ENCODE measurements at regions of chr6 and their contacts with region 1.

Region 1: GRCh38 chr6:50815436-50816114 is 3.1 kb upstream of the TFAP2B start:
- DNase-seq: no peak
- ATAC-seq: no peak
- H3K4me3 ChIP-seq: peak overlapping the region; percentile 35 to 67
- H3K4me3 Mint-ChIP-seq: peak overlapping the region; percentile 61 to 84 (median 82)
- H3K27ac ChIP-seq: no peak overlapping the region
- H3K27ac Mint-ChIP-seq: no peak overlapping the region
- H3K4me1 ChIP-seq: peaks cover 0 to 12% of the 10 kb centered on the region in 2 experiments
- H3K4me1 Mint-ChIP-seq: peaks cover 7 to 20% (median 17%) of the 10 kb centered on the region in 3 donors
- H3K27me3 ChIP-seq: peaks cover 10 to 20% of the 10 kb centered on the region in 2 experiments
- H3K27me3 Mint-ChIP-seq: peaks cover 43 to 51% of the 10 kb centered on the region in 2 donors

Region 2: GRCh38 chr6:50699051-50699775 is 116.4 kb before region 1 on chr6:
- CTCF ChIA-PET with region 1: no interaction called
- POLR2A ChIA-PET with region 1: interaction called in 1 of 2 experiments, 15 read pairs
- DNase-seq: no peak
- ATAC-seq: no peak
- H3K4me3 ChIP-seq: no peak overlapping the region
- H3K4me3 Mint-ChIP-seq: no peak overlapping the region
- H3K27ac ChIP-seq: no peak overlapping the region
- H3K27ac Mint-ChIP-seq: no peak overlapping the region
- H3K4me1 ChIP-seq: no peaks in the 10 kb centered on the region
- H3K4me1 Mint-ChIP-seq: no peaks in the 10 kb centered on the region
- H3K27me3 ChIP-seq: no peaks in the 10 kb centered on the region
- H3K27me3 Mint-ChIP-seq: peaks cover under 1 to 9% of the 10 kb centered on the region in 2 donors

Region 3: DNA sequence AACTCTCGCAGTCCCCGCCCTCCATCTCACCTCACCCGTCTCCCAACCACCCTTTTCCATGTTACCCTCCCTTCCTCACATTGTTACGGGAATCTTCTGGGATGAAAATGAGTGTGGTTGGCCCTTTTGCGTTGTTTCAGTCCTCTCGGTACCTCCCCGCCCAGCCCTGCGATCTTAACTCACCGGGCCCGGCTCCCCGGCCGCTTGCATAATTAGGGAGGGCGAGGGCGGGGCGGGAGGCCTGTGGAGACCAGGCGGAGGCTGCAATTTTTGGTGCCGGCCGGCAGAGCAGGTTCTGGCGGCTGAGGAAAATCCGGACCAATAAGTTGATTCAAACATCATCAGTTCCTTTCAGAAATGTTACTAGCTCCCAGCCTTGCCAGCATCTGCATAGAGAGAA is 28.3 kb after region 1 on chr6:
- CTCF ChIA-PET with region 1: interaction called in 1 of 2 experiments, 10 read pairs
- POLR2A ChIA-PET with region 1: no interaction called
- DNase-seq: no peak
- ATAC-seq: no peak
- H3K4me3 ChIP-seq: no peak overlapping the region
- H3K4me3 Mint-ChIP-seq: no peak overlapping the region
- H3K27ac ChIP-seq: no peak overlapping the region
- H3K27ac Mint-ChIP-seq: no peak overlapping the region
- H3K4me1 ChIP-seq: no peaks in the 10 kb centered on the region
- H3K4me1 Mint-ChIP-seq: no peaks in the 10 kb centered on the region
- H3K27me3 ChIP-seq: peaks cover 28 to 53% of the 10 kb centered on the region in 2 experiments
- H3K27me3 Mint-ChIP-seq: peaks cover 64 to 86% of the 10 kb centered on the region in 2 donors

Region 4: DNA sequence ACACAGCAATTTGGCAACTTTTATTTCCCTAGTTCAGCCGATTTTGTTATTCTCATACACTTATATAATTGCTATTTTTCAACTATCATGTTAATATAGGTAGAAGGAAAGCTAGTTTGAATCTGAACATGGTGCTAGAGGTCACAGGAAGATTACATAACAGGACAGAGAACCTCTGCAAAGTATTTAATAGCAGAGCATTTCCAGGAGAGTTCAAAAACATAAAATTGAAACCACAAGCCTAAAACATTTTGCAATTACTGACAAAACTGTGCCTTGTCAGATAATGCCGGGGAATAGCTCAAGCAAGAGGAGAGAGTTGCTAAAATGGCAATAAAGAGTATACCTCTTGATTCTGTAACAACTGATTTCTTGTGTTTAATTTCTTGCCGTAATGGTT is 73.9 kb after region 1 on chr6:
- CTCF ChIA-PET with region 1: no interaction called
- POLR2A ChIA-PET with region 1: no interaction called
- DNase-seq: no peak
- ATAC-seq: no peak
- H3K4me3 ChIP-seq: no peak overlapping the region
- H3K4me3 Mint-ChIP-seq: no peak overlapping the region
- H3K27ac ChIP-seq: no peak overlapping the region
- H3K27ac Mint-ChIP-seq: no peak overlapping the region
- H3K4me1 ChIP-seq: no peaks in the 10 kb centered on the region
- H3K4me1 Mint-ChIP-seq: no peaks in the 10 kb centered on the region
- H3K27me3 ChIP-seq: no peaks in the 10 kb centered on the region
- H3K27me3 Mint-ChIP-seq: peaks cover 0 to 4% of the 10 kb centered on the region in 2 donors